ENCODE measurements at regions of chr12 and their contacts with region 1.

Region 1: GRCh38 chr12:34126239-34126641 is 103.9 kb downstream of the ALG10 start:
- DNase-seq: no peak
- H3K4me3 ChIP-seq: no peak overlapping the region
- H3K27ac ChIP-seq: no peak overlapping the region
- H3K4me1 ChIP-seq: no peaks in the 10 kb centered on the region
- H3K27me3 ChIP-seq: no peaks in the 10 kb centered on the region
- CTCF ChIP-seq: no peak

Region 2: DNA sequence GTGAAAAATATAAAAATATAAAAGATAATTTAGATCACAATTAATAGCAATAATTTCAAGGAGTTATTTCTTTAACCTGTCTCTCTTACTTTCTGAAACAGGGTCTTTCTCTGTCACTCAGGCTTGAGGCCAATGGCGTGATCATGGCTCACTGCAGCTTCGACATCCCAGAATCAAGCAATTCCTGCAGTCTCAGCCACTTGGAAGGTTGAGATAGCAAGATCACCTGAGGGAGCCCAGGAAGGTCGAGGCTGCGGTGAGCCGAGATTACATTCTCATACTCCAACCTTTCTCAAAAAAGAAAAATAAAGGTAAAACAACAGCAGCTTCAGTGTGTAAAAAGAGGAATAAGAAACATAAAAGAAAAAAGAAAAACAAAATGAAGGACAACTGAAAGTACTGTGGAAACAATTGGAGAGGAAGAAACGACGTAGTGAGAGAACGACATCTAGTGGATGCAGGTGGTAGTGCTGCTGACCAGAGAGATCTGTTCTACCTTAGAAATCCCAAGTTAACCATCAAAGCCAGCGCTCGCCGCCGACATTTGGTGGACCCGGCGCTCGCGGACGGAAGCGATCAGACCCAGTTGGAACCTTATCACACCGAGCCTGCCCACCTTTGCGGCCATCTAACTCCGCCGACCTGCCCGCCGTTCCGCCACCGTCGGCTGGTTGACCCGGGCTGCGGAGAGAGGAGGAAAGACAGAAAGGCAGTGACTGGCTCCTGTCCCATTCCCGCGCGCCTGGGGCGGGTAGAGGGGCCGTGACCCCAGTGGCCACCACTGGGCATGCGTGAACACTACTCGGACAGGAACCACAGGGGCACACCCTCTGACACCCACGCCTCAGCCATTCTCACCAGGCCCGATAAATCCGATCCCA is 92.2 kb after region 1 on chr12:
- CTCF ChIA-PET with region 1: no interaction called
- dilution Hi-C with region 1: no loop called
- in situ Hi-C with region 1: loop called in 1 of 2 experiments (anchors 10 kb)
- intact Hi-C with region 1: loop called (anchors 1 kb)
- DNase-seq: peak; percentile 50
- H3K4me3 ChIP-seq: peak overlapping the region; percentile 57 to 66 (median 60)
- H3K27ac ChIP-seq: no peak overlapping the region
- H3K4me1 ChIP-seq: peaks cover 7% of the 10 kb centered on the region
- H3K27me3 ChIP-seq: no peaks in the 10 kb centered on the region
- CTCF ChIP-seq: peak; percentile 84 to 88

Region 3: GRCh38 chr12:34625116-34625515 is 498.9 kb after region 1 on chr12:
- CTCF ChIA-PET with region 1: no interaction called
- dilution Hi-C with region 1: no loop called
- in situ Hi-C with region 1: no loop called
- intact Hi-C with region 1: loop called (anchors 1 kb)
- DNase-seq: peak; percentile 1
- H3K4me3 ChIP-seq: no peak overlapping the region
- H3K27ac ChIP-seq: no peak overlapping the region
- H3K4me1 ChIP-seq: no peaks in the 10 kb centered on the region
- H3K27me3 ChIP-seq: no peaks in the 10 kb centered on the region
- CTCF ChIP-seq: peak; percentile 10 to 44